ENCODE measurements at regions of chr2 and their contacts with region 1.

Region 1: GRCh38 chr2:160294339-160294803 is 94.3 kb upstream of the ITGB6 start:
- DNase-seq: no peak
- H3K4me3 ChIP-seq: no peak overlapping the region
- CTCF ChIP-seq: no peak

Region 2: DNA sequence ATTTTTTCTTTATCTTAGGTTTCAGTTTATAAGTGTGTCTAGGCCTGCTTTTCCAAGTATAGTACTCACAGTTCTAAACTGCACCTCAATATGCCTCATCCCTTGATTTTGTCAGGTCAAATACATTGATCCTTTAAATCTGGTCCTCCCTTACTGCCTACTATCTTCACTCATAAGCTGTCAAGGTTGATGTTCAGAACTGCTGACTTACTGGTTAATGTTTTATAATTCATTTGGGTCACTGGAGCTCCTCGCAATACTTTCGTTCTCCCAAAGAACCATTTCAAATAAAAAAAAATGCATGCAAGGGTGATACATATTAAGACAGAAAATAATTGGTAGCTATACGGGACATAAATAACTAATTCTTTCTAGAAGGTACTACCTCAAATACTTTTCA is 623.3 kb before region 1 on chr2:
- CTCF ChIA-PET with region 1: no interaction called
- POLR2A ChIA-PET with region 1: no interaction called
- DNase-seq: no peak
- H3K4me3 ChIP-seq: no peak overlapping the region
- CTCF ChIP-seq: no peak

Region 3: GRCh38 chr2:160278879-160279177 is 15.5 kb before region 1 on chr2:
- CTCF ChIA-PET with region 1: interaction called, 17 read pairs
- POLR2A ChIA-PET with region 1: no interaction called
- DNase-seq: no peak
- H3K4me3 ChIP-seq: no peak overlapping the region
- CTCF ChIP-seq: peak; percentile 32

Measured in AG04449 (cell line).